Posterior cingulate gyrus (tissue), 11 donors: ENCODE measurements at regions of chr14 and their contacts with region 1.

Region 1: DNA sequence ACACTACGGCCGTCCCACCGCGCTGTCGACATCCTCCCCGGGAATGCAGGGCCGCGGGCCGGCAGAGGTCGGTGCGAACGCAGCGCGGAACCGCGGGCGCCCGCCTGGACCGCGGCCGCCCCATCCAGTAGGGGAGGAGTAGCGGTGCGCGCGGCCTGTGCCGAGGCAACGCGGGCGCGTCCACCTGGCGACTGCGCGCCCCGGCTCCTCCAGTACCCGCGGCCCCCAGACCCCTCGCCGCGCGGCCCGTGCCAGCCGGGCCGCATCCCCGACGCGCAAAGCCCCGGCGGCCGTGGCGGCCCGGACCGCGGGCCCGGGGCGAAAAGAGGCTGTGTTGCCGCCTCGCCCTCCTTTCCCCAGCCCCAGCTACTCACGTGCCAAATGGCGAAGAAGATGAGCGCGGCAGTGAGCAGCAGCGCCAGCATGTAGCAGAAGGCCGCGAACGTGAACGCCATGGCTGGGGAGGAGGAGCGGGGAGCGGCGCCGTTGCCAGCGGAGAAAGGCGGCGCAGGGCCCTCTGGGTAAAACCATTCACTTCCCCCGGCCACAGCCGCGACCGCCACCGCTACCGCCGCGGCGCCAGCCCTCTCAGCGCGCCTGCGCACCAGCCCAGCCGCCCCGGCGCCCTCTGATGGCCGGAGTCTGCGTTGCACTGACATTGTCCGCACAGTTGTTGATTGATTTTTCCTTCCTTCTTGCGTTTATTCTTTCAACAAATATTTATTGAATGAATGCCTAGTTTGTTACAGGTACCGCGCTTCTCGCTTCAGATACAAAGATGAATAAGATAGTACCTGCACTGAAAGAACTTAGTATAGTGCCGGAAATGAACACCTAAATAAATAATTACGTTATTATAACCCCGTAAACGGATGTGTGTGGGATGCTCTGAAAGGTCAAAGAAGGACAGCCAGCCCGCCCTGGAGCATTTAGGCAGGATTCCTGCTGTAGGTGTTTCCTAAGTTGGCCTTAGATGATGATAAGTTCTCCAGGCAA is at the start of gene CNIH1:
- DNase-seq: peak; percentile 85 to 98 (median 90)

Region 2: DNA sequence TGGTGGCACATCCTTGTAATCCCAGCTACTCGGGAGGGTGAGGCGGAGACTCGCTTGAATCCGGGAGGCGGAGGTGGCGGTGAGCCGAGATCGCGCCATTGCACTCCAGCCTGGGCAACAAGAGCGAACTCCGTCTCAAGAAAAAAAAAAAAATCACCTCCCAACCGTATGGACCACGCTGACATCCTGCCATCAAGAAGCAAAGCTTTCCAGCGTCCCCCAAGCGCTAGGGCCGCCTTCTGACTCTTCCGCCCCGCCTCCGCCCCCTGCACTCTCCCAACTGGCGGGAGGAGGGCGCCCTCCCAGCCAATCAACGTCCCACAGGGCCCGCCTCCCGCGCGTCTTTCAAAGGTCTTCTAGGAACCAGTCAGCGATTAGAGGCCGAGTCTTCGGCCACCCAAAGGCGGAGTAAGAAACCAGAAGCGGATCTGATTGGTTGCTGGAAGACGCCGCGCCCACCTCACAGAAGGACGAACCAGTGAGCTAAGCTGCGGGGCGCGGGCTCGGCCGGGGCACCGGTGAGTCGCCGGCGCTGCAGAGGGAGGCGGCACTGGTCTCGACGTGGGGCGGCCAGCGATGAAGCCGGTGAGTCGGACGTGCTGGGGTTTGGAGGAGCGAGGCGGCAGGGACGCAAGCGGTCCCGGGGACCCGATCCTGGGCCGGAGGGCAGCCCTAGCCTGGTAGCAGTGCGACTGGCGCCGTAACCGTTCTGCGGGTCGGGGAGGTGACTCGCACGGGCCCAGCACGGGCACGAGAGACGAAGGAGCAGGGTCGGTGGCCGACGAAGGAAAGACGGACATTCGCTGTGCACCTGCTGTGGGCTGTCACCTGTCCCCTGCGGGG is 44.5 kb before region 1 on chr14 and contains the start of gene CDKN3:
- intact Hi-C with region 1: loop called (anchors 1 kb)
- DNase-seq: peak; percentile 93 to 100 (median 98)

Region 3: DNA sequence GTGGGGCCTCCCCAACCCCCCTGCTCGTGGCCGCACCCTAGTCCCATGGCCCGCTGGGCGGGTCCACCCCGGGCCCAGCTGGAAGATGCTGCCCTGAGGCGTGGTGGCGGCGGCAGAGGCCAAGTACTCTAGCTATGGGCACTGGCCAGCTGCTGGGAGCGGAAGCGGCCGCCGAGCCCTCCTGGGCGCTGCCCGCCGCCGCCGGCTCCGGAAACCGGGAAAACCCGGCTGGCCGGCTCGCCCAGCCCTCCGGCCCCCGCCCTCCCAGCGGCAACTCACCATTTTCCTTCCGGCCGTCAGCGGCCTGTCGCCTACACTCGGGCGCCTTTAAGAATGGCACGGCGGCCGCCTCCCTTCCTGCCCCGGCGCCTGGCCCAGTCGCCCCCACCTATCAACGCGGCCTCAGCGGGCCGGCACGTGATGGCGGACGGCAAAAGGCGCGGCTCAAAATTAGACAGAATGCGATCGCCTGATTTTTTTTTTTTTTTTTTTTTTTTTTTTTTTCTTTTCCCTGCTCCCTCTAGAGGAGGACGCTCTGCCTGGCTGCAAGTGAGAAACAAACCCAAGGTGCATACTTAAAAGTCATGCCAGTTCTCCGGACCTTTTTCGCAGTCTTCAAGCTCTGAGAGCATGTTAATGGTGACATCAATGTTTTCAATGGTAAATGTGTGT is 47.6 kb after region 1 on chr14 and contains the start of gene GMFB:
- intact Hi-C with region 1: loop called (anchors 1 kb)
- DNase-seq: peak; percentile 82 to 97 (median 88)

Region 4: GRCh38 chr14:54691525-54692283 is 250.5 kb after region 1 on chr14:
- intact Hi-C with region 1: no loop called
- DNase-seq: peak; percentile 53 to 95 (median 69)